ENCODE measurements at regions of chr18 and their contacts with region 1.

Region 1: DNA sequence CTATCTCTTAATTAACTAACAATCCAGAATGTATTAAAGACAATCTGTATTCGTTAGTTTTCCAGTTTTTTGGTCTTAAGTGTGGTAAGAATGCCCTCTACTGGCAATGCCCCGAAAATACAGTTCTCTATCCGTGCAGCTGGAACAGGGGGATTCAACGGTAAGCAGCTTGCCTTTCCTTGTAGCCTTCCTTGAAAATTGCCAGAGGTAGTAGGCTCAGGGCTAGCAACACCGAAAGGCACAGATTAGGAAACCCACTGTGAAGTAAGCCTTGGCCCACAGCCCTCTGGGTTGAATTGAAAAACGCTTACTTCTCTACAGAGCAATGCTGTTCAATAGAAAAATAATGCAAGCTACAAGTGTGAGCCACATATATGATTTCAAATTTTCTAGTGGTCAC is 17.1 kb upstream of the VPS4B start:
- DNase-seq: peak; percentile 48
- H3K4me3 ChIP-seq: no peak overlapping the region
- H3K27ac ChIP-seq: no peak overlapping the region
- H3K27me3 ChIP-seq: peaks cover 6% of the 10 kb centered on the region
- CTCF ChIP-seq: peak; percentile 88

Region 2: DNA sequence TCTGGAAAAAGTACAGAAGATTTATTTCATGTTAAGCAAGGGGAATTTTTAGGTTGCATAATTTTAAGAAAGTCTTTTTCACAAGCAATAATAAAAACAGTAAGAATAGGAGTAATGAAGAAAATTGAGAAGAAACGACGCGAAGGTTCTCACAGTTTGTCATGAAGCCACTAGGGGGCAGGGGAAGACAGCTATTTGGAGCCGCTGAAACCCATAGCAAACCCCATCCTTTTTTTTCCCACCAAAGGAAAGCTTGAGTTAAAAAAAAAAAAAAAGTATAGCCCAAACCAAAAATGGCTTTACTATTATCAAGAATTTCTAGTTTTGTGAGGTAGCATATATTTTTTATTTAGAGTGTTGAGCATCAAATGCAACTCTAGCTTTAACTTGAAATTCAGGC is 423.1 kb before region 1 on chr18:
- CTCF ChIA-PET with region 1: interaction called, 83 read pairs
- POLR2A ChIA-PET with region 1: no interaction called
- DNase-seq: peak; percentile 15
- H3K4me3 ChIP-seq: no peak overlapping the region
- H3K27ac ChIP-seq: no peak overlapping the region
- H3K27me3 ChIP-seq: peaks cover 7% of the 10 kb centered on the region
- CTCF ChIP-seq: peak; percentile 86

Region 3: DNA sequence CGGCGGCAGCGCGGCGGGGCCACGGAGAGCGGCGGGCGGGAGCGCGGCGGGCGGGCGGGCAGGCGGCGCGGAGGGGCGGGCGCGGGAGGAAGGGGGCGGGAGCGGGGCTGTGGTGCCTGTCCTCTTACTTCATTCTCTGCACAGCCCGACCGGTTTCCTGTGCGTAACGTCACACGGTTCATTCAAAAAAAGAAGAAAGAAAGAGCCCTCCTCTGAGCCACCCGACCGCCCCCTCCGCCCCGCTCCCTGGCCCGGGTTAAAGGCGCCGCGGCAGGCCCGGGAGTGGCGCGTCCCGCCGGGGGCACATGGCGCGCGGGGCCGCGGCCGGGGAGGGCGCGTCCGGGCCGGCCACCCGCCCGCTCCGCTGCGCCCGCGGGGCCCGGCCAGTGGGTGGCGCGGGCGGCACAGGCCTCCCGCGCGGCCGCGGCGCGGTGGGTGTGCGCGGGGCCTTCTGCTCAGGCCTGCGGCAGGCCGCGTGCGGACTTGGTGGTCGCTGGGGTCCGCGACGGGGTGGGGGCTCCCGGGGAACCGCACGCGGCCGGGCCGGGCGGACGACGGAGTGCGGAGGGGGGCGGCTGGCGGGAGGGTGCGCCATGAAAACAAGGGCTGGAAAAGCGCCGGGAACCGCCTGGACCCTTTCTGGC is 119.2 kb before region 1 on chr18:
- CTCF ChIA-PET with region 1: interaction called, 23 read pairs
- POLR2A ChIA-PET with region 1: no interaction called
- DNase-seq: peak; percentile 41
- H3K4me3 ChIP-seq: peak overlapping the region; percentile 70
- H3K27ac ChIP-seq: no peak overlapping the region
- H3K27me3 ChIP-seq: peaks cover 19% of the 10 kb centered on the region
- CTCF ChIP-seq: no peak

Region 4: DNA sequence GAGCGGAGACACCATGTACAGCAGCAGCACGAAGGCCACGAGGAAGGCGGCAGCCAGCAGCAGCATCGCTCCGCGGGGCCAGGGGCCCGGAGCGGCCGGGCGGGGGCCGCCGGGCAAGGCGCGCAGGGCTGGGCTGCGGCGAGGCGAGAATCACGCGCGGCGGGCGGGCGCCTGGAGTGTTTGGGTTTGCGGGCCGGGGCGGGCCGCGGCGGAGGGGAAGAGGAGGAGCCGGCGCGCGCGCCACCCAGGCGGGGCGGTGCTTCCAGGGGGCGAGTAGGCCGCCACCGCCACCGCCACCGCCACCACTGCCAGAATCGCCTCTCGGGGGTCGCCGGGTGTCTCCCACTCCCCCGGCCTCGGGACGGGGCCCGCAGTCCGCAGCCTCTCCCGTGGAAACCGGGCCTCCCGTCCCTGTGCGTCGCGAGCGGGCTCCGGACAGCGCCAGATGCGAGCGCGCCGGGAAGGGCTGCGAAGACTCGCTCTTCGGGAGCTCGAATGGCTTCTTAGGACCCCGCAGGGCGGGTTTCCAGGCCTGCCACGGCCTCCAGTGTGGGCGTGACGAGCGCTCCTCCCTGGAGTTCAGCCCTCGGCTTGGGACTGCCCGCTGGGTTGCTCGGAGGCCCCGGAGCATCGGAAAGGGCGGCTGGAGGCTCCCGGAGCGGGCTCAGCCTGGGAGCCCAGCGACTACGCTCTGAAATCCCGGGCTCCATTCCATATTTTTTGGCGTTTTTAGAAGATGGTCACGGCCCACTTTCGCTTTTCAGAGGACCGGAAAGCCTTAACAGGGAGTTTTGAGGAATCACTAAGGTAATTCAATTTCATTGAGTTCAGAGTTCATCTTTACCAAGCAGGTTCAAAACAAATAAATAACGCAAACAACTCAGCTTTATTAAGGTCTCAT is 72.0 kb before region 1 on chr18 and contains the start of gene KDSR:
- CTCF ChIA-PET with region 1: interaction called, 11 read pairs
- POLR2A ChIA-PET with region 1: interaction called, 3 read pairs
- DNase-seq: peak; percentile 97
- H3K4me3 ChIP-seq: peak within 1 kb of the TSS; percentile 90
- H3K27ac ChIP-seq: peak within 1 kb of the TSS; percentile 96
- H3K27me3 ChIP-seq: no peaks in the 10 kb centered on the region
- CTCF ChIP-seq: no peak
- polyA plus RNA-seq, gene KDSR: 34.0 and 39.9 TPM in 2 replicates

Region 5: GRCh38 chr18:63427558-63427957 is 11.8 kb before region 1 on chr18:
- CTCF ChIA-PET with region 1: interaction called, 19 read pairs
- POLR2A ChIA-PET with region 1: no interaction called
- DNase-seq: no peak
- H3K4me3 ChIP-seq: no peak overlapping the region
- H3K27ac ChIP-seq: no peak overlapping the region
- H3K27me3 ChIP-seq: peaks cover 9% of the 10 kb centered on the region
- CTCF ChIP-seq: no peak

Measured in AG04450 (cell line).